WTC11 (cell line): ENCODE measurements at regions of chr15 and their contacts with region 1.

Region 1: GRCh38 chr15:40081691-40082194 is 26.9 kb downstream of the BMF start:
- DNase-seq: peak; percentile 64
- ATAC-seq: peak; percentile 92
- H3K4me3 Mint-ChIP-seq: peak overlapping the region; percentile 41
- H3K27ac Mint-ChIP-seq: peak overlapping the region; percentile 12; the same call in 1 of the 2 replicates
- H3K4me1 Mint-ChIP-seq: peaks cover 36% of the 10 kb centered on the region
- H3K27me3 Mint-ChIP-seq: peaks cover 28% of the 10 kb centered on the region
- CTCF ChIP-seq: no peak

Region 2: GRCh38 chr15:40054605-40055545 is 26.9 kb before region 1 on chr15:
- CTCF ChIA-PET with region 1: interaction called, 18 read pairs
- POLR2A ChIA-PET with region 1: interaction called, 17 read pairs
- DNase-seq: no peak
- ATAC-seq: no peak
- H3K4me3 Mint-ChIP-seq: no peak overlapping the region
- H3K27ac Mint-ChIP-seq: peak overlapping the region; percentile 93
- H3K4me1 Mint-ChIP-seq: peaks cover 30% of the 10 kb centered on the region
- H3K27me3 Mint-ChIP-seq: no peaks in the 10 kb centered on the region
- CTCF ChIP-seq: no peak